CD4-positive, alpha-beta T cell (primary cell): ENCODE measurements at regions of chr7 and their contacts with region 1.

Region 1: DNA sequence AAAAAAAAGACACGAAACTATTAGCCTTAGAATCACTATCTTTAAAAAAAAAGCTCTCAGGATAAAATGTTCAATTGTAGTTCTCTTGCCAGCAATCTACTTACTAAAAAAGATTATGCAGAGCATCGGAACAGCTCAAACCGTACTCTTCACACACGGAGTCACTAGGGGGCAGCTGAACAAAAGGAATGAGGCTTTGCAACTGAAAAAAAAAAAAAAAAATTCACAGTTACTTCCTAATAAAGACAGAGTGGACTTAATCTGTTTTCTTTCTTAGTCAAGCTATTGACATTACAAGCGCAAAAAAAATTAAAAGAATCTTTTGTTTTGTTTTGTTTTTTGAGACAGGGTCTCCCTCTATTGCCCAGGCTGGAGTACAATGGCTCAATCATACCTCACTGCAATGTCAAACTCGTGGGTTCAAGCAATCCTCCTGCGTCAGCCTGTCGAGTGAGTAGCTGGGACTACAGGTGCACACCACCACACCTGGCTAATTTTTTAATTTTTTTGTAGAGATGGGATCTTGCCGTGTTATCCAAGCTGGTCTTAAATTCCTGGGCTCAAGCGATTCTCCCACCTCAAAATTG is 11.5 kb downstream of the PMS2 start:
- DNase-seq: peak; percentile 26 to 80 (median 40)
- ATAC-seq: peak; percentile 74
- H3K4me3 ChIP-seq: no peak overlapping the region
- H3K4me3 Mint-ChIP-seq: no peak overlapping the region
- H3K27ac ChIP-seq: no peak overlapping the region
- H3K27ac Mint-ChIP-seq: no peak overlapping the region
- H3K4me1 ChIP-seq: no peaks in the 10 kb centered on the region
- H3K4me1 Mint-ChIP-seq: no peaks in the 10 kb centered on the region
- H3K27me3 ChIP-seq: no peaks in the 10 kb centered on the region
- H3K27me3 Mint-ChIP-seq: no peaks in the 10 kb centered on the region
- CTCF ChIP-seq: peak; percentile 80

Region 2: DNA sequence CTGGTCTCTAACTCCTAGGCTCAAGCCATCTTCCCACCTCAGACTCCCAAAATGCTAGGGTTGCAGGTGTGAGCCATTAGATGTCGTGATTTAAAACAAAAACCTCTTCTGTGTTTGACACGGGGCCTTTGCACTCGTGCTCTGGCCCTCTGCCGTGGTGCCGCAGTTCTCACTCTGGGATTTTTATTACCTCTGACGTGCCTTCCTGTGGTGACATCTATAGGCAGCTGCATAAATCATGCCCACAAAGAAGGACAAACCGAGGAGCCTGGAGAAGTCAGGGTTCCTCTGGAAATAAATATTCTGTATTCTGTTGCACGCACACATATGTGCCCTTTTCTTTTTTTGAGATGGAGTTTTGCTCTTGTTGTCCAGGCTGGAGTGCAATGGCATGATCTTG is 142.6 kb before region 1 on chr7:
- CTCF ChIA-PET with region 1: interaction called, 4 read pairs
- POLR2A ChIA-PET with region 1: no interaction called
- intact Hi-C with region 1: loop called in 1 of 2 experiments (anchors 10 kb)
- DNase-seq: no peak
- ATAC-seq: no peak
- H3K4me3 ChIP-seq: no peak overlapping the region
- H3K4me3 Mint-ChIP-seq: no peak overlapping the region
- H3K27ac ChIP-seq: no peak overlapping the region
- H3K27ac Mint-ChIP-seq: no peak overlapping the region
- H3K4me1 ChIP-seq: peaks cover 28% of the 10 kb centered on the region
- H3K4me1 Mint-ChIP-seq: peaks cover 25% of the 10 kb centered on the region
- H3K27me3 ChIP-seq: no peaks in the 10 kb centered on the region
- H3K27me3 Mint-ChIP-seq: no peaks in the 10 kb centered on the region
- CTCF ChIP-seq: no peak

Region 3: GRCh38 chr7:6106140-6106904 is 109.0 kb after region 1 on chr7:
- CTCF ChIA-PET with region 1: interaction called, 14 read pairs
- POLR2A ChIA-PET with region 1: interaction called, 5 read pairs
- intact Hi-C with region 1: no loop called
- DNase-seq: peak in 13 of 14 experiments; percentile 7 to 77 (median 25)
- ATAC-seq: peak; percentile 4
- H3K4me3 ChIP-seq: peak overlapping the region; percentile 88
- H3K4me3 Mint-ChIP-seq: peak overlapping the region; percentile 91
- H3K27ac ChIP-seq: peak overlapping the region; percentile 73
- H3K27ac Mint-ChIP-seq: peak overlapping the region; percentile 90
- H3K4me1 ChIP-seq: peaks cover 16% of the 10 kb centered on the region
- H3K4me1 Mint-ChIP-seq: peaks cover 33% of the 10 kb centered on the region
- H3K27me3 ChIP-seq: no peaks in the 10 kb centered on the region
- H3K27me3 Mint-ChIP-seq: no peaks in the 10 kb centered on the region
- CTCF ChIP-seq: peak; percentile 22

Region 4: DNA sequence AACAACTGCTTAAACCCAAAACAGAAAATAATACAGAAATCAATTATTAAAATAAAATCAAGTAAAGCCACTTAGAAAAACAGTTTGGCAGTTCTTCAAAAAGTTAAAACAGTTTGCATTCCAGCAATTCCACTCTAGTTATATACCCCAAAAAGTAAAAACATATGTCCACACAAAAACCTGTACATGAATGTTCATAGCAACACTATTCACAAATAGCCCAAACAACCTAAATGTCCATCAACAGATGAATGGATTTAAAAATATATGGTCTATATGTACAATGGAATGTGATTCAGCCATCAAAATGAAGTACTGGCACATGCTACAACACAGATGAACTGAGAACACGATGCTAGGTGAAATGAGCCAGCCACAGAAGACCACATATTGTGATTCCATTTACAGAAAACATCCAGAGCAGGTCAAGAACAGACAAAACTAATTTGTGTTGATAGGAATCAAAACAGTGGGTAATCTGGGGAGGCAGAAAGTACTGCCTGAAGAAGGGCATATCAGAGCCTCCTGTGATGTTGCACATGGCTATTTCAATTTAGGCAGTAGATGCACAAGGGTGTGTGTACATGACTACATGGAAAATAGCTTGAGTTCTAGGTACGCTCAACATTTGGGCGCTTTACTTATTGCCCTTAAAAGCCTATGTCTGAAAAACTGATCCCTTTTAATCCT is 208.8 kb after region 1 on chr7:
- CTCF ChIA-PET with region 1: no interaction called
- POLR2A ChIA-PET with region 1: no interaction called
- intact Hi-C with region 1: no loop called
- DNase-seq: no peak
- ATAC-seq: no peak
- H3K4me3 ChIP-seq: no peak overlapping the region
- H3K4me3 Mint-ChIP-seq: no peak overlapping the region
- H3K27ac ChIP-seq: no peak overlapping the region
- H3K27ac Mint-ChIP-seq: no peak overlapping the region
- H3K4me1 ChIP-seq: no peaks in the 10 kb centered on the region
- H3K4me1 Mint-ChIP-seq: no peaks in the 10 kb centered on the region
- H3K27me3 ChIP-seq: no peaks in the 10 kb centered on the region
- H3K27me3 Mint-ChIP-seq: no peaks in the 10 kb centered on the region
- CTCF ChIP-seq: no peak

Region 5: GRCh38 chr7:6435486-6436384 is 438.4 kb after region 1 on chr7:
- CTCF ChIA-PET with region 1: interaction called, 3 read pairs
- POLR2A ChIA-PET with region 1: no interaction called
- intact Hi-C with region 1: loop called in 1 of 2 experiments (anchors 10 kb)
- DNase-seq: peak; percentile 82 to 94 (median 87)
- ATAC-seq: peak; percentile 93
- H3K4me3 ChIP-seq: peak overlapping the region; percentile 45
- H3K4me3 Mint-ChIP-seq: peak overlapping the region; percentile 68
- H3K27ac ChIP-seq: peak overlapping the region; percentile 18 to 39
- H3K27ac Mint-ChIP-seq: peak overlapping the region; percentile 81
- H3K4me1 ChIP-seq: peaks cover 47% of the 10 kb centered on the region
- H3K4me1 Mint-ChIP-seq: peaks cover 46% of the 10 kb centered on the region
- H3K27me3 ChIP-seq: no peaks in the 10 kb centered on the region
- H3K27me3 Mint-ChIP-seq: no peaks in the 10 kb centered on the region
- CTCF ChIP-seq: peak; percentile 98